ENCODE measurements at regions of chr4 and their contacts with region 1.

Region 1: DNA sequence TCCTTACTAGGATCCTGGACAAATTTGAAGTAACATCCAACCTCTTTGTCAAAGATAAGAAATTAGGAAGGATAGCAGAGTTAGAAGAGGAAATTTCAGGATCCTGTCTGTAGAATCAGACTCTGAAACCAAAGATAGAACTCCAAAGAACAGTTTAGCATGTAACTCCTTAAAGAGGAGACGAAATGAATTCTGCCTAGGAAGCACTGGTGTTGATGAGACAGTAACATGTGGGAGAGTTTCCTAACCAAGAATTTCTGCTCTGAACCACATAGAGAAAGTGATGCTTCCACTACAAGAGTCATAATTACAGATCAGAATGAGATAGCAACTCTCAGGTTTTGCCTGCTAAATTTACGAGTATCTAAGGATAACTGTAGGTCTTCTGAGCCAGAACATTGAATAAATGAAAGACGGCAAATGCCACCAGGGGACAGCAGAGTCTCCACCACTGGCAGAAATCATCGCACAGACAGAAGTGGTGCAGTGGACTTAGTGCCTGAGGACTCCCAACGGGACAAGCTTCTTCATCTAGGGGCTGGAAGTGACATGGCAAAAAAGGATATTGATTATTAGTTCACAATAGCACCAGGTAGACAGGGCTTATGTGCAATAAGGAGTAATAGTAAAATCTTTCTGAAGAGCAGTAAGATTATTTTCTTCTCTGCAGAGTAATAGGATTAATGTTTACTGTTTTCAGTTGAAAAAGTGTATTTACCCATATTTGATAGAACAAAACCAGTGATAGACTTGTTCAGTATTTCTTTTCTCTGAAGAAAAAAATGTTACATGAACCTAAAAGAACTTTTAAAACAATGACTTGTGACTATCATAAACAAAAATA is 6.7 kb upstream of the PPID start:
- DNase-seq: peak; percentile 52
- ATAC-seq: peak; percentile 94

Region 2: DNA sequence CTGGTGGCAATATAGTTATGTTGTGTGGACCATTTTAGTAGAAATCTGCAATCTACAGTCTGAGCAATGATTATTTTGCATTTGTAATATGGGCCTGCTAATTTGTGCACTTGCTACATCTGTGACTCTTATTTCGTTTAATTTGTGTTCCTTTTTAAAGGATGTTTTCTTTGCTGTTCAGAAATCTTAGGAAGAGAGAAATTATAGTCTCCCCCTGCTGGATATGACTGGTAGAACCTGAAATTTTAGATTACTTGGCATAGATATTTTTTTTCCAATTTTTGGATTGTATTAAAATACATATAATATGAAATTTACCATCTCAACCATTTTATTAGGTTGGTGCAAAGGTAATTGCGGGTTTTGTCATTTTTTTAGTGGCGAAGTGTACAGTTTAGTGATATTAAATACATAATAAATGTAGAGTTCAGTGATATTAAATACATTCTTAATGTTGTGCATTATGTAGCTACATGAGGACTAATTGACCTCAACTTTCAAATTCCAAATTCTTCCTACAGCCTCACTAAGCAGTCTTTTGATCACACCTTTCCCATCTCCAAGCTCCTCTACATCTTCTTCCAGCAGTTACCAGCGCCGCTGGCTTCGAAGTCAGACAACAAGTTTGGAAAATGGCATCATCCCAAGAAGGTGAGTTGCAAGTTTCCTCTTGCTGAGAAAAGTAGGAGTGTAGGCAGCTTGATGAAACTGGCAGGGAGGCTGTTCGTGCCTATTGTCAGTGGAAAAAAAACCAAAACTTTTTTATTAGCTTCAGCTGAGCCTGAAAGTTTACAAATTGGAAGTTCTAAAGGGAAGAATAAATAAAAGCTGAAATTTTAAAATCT is 121.1 kb after region 1 on chr4:
- intact Hi-C with region 1: loop called (anchors 2 kb)
- DNase-seq: no peak
- ATAC-seq: no peak

Measured in left ventricle myocardium superior (tissue), 1 donor.